Activated naive CD4-positive, alpha-beta T cell treated with anti-CD3 and anti-CD28 coated beads for 36 hours (primary cell): ENCODE measurements at regions of chr2 and their contacts with region 1.

Region 1: DNA sequence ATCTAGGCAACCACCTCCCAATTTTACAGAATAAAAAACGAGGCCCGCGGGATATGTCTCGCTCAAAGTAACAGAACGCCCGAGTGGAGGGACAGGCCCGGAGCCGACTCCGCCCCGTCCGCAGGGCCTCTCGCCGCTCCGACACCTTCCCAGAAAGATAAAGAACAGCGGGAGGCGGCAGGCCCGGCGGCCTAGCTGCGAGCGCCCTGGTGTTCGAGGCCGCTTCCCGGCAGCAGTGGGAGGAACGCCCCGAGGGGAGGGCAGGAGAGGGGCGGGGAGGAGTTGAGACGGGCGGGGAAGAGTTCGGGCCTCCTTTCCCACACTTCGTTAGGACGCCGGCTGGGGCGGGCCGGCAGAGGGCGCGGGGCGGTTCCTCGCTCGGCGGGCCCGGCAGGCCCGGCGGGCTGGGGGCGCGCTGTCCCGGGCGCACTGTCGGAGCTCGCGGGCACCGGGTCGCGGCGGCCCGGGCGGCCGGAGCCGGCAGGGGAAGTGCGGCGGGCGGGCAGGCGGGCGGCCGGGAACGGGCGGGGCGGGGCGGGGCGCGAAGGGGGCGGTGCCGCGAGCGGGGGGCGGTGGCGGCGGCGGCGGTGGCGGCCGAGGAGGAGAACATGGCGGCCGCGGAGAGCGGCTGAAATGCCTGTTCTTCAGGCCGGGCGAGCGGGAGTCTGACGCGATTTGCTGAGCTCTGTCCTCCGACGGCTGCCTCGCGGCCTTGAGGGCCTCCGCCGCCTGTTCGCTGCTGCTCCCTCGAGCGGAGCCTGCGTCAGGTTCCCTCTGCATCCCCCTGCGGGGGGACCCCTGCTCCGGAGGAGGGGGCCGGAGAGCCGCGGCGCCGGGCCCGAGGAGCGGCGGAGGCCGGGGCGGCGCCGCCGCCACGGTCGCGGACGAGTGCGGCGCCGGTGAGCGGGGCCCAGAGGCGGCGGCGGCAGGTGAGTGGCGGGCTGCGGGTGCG is at the start of gene NCOA1:
- DNase-seq: peak; percentile 95
- H3K4me3 Mint-ChIP-seq: peak within 1 kb of the TSS; percentile 89
- H3K27ac Mint-ChIP-seq: peak within 1 kb of the TSS; percentile 95
- H3K4me1 Mint-ChIP-seq: peaks cover 47% of the 10 kb centered on the region
- H3K27me3 Mint-ChIP-seq: no peaks in the 10 kb centered on the region
- total RNA-seq, gene NCOA1: 14.0 to 15.4 TPM

Region 2: DNA sequence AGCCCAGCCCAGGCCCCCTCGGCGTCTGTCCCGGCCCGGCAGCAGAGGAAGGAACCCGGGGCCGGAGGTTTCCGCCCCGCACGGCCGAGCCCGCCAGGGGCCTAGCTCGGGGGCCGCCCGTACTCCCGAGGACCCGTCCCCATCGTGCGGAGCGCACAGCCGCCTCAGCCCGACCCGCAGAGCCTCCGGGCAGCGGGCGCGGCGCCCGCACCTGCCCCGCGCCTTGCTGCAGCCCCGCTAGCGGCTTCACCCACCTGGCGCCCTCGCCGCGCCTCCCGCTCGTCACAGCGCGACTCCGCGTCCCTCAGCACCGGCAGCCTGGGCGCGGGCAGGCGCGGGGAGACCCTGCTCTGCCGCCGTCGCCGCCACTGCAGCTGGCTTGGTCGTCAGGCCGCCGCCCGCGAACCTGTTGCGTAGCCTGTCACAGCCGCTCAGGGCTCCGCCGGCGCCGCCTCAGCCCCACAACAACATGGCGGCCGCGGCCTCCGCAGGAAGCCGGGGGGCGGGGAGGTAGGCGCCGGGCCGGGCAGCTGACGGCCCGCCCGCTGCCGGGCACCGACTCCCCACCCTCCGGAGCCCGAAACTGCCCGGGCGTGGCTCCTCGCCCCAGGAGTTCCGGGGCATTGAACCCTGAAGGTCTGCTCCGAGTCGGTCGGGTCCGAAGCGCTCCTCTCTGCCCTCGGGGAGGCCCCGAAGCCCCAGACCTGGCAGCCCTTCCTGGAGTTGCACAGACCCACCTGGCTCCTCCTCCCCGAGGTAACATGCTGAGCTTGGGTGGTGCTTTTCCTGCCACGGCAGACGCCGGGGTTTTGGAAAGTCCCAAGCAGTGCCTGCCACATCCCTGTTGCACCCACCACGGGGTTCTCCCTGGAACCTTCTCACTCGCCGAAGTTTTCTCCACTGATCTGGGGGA is 130.6 kb before region 1 on chr2 and contains the start of gene ITSN2:
- CTCF ChIA-PET with region 1: no interaction called
- intact Hi-C with region 1: loop called (anchors 2 kb)
- DNase-seq: peak; percentile 84
- H3K4me3 Mint-ChIP-seq: peak within 1 kb of the TSS; percentile 82
- H3K27ac Mint-ChIP-seq: peak within 1 kb of the TSS; percentile 88
- H3K4me1 Mint-ChIP-seq: peaks cover 25% of the 10 kb centered on the region
- H3K27me3 Mint-ChIP-seq: no peaks in the 10 kb centered on the region
- total RNA-seq, gene ITSN2: 46.1 to 46.7 TPM

Region 3: GRCh38 chr2:24521975-24522639 is 31.2 kb after region 1 on chr2:
- CTCF ChIA-PET with region 1: interaction called, 5 read pairs
- intact Hi-C with region 1: loop called (anchors 1 kb)
- DNase-seq: no peak
- H3K4me3 Mint-ChIP-seq: no peak overlapping the region
- H3K27ac Mint-ChIP-seq: peak overlapping the region; percentile 71
- H3K4me1 Mint-ChIP-seq: peaks cover 38% of the 10 kb centered on the region
- H3K27me3 Mint-ChIP-seq: no peaks in the 10 kb centered on the region

Region 4: GRCh38 chr2:24827321-24828237 is 336.6 kb after region 1 on chr2:
- CTCF ChIA-PET with region 1: interaction called, 3 read pairs
- intact Hi-C with region 1: loop called (anchors 5 kb)
- DNase-seq: peak; percentile 85
- H3K4me3 Mint-ChIP-seq: no peak overlapping the region
- H3K27ac Mint-ChIP-seq: no peak overlapping the region
- H3K4me1 Mint-ChIP-seq: peaks cover 17% of the 10 kb centered on the region
- H3K27me3 Mint-ChIP-seq: no peaks in the 10 kb centered on the region